Ascending aorta (tissue), 2 donors: ENCODE measurements at regions of chr4 and their contacts with region 1.

Region 1: DNA sequence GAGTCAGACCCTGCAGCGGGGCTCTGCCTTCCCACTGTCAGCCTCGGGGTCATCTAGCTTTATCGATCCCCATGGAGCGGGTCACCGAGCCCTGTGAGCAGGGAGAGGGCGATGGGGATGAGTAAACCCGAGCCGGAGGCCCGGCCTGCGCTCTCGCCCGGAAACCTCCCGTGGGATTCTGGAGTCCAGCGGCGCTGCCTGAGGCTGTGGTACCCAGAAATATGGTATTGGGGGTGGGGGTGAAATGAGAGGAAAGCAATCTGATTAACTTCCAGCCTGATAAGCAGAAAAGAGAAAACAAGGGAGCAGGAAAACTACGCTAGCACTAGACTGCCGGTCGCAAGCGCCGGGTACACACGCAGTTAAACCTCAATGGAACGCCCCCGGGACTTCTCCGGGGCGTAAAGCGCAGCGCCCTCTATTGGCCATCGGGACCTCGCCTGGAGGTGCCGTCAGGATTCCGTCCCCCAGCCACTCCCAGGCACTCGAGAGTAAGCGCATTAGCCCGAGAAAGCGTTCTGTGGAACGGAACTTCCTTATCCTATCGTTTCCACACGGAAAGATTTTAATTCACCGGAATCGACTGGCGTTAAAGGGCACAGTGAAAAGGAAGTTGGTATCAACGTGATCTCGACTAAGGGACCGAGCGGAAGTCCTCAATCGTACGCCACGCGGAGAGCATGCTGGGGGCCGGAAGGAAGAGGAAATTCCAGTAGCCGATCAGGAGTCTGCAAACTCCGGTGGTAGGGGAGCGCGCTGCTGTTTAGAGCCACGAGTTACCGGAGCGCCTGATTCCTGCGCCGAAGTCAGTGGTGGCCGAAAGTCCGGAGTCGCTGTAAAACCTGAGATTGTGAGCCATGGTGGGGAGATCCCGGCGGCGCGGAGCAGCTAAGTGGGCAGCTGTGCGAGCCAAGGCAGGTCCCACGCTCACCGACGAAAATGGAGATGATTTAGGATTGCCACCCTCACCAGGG is at the start of gene UTP3:
- DNase-seq: peak; percentile 72 to 97
- H3K4me3 ChIP-seq: peak within 1 kb of the TSS; percentile 86 to 88
- H3K27ac ChIP-seq: peak within 1 kb of the TSS; percentile 81 to 98
- H3K4me1 ChIP-seq: peaks cover 0 to 23% of the 10 kb centered on the region in 2 donors
- H3K27me3 ChIP-seq: no peaks in the 10 kb centered on the region
- CTCF ChIP-seq: peak; percentile 86 to 92 (median 90)
- total RNA-seq, gene UTP3: 3.2 TPM

Region 2: DNA sequence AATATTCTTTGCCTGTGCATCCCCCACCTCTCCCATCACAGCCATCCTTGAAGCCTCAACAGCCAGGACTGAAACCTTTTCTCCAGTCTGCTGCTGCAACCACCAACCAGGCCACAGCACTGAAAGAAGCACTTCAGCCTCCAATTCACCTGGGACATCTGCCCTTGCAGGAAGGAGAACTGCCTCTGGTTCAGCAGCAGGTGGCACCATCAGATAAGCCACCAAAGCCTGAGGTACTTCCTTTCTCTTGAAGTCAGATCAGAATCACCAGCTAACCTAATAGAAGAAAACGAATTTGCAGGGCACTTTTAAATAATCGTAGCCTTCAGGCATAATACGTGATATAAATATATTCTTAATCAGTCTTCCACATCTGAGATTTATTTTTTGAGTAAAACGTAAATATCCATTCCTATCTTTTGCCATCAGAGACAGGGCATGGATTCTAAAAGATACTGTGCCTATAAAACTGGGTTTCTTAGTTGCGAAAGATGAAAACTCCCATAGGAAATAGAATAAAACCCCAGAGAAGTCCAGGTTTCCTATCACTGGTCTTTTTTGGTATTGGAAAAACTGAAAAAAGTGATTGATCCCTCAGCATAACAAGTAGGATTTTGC is 86.6 kb before region 1 on chr4:
- intact Hi-C with region 1: loop called (anchors 2 kb)
- DNase-seq: peak in 1 of 2 donors; percentile 67
- H3K4me3 ChIP-seq: no peak overlapping the region
- H3K27ac ChIP-seq: no peak overlapping the region
- H3K4me1 ChIP-seq: no peaks in the 10 kb centered on the region
- H3K27me3 ChIP-seq: no peaks in the 10 kb centered on the region
- CTCF ChIP-seq: peak; percentile 54 to 70 (median 64)

Region 3: DNA sequence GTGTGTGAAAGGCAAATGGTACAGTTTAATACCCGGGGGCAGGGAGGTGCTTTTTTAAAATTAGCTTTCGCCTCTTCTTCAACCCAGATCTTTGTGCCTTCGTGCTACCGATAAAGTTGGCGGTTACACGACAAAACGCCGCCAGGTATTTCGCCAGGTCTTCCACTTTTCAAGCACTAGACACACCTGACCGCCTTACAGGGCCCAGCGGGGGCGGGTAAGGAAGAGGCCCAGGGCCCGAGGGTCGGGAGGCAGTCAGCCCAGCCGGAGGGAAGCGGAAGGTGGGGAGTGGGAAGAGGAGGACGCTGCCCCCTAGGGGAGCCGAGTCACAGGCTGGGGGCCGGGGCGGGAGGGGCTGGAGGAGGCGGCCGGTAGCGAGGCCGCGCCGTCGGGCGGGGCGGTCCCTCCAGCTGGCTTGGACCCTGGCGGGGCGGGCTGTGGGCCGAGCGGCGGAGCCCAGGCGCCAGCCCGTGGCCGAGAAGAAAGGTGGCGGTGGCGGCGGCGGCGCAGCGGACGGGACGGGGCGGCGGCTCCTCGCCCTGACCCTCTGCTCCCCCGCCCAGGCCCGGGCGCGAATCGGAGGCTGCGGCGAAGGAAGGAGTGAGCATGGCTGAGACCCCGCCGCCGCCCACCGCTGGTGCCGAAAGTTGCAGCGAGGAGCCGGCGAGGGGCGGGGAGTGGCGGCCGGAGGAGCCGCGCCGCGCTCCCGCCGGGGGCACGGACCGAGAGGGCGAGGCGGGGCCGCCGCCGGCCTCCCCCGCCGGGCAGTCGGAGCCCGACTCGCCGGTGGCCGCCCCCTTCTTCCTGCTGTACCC is 16.4 kb after region 1 on chr4:
- intact Hi-C with region 1: loop called (anchors 1 kb)
- DNase-seq: peak; percentile 24 to 88
- H3K4me3 ChIP-seq: peak overlapping the region; percentile 89 to 98
- H3K27ac ChIP-seq: peak overlapping the region; percentile 92 to 96
- H3K4me1 ChIP-seq: peaks cover 0 to 11% of the 10 kb centered on the region in 2 donors
- H3K27me3 ChIP-seq: no peaks in the 10 kb centered on the region
- CTCF ChIP-seq: peak; percentile 13 to 54 (median 28)

Region 4: GRCh38 chr4:70829015-70829414 is 140.9 kb after region 1 on chr4:
- intact Hi-C with region 1: no loop called
- DNase-seq: no peak
- H3K4me3 ChIP-seq: no peak overlapping the region
- H3K27ac ChIP-seq: no peak overlapping the region
- H3K4me1 ChIP-seq: no peaks in the 10 kb centered on the region
- H3K27me3 ChIP-seq: no peaks in the 10 kb centered on the region
- CTCF ChIP-seq: no peak

Region 5: GRCh38 chr4:70901984-70902576 is 214.0 kb after region 1 on chr4 and contains the start of gene MOB1B:
- intact Hi-C with region 1: loop called (anchors 10 kb)
- DNase-seq: peak; percentile 49 to 91
- H3K4me3 ChIP-seq: peak within 1 kb of the TSS; percentile 83 to 86
- H3K27ac ChIP-seq: peak within 1 kb of the TSS; percentile 77 to 85
- H3K4me1 ChIP-seq: no peaks in the 10 kb centered on the region
- H3K27me3 ChIP-seq: no peaks in the 10 kb centered on the region
- CTCF ChIP-seq: peak; percentile 24 to 57 (median 54)
- total RNA-seq, gene MOB1B: 2.6 TPM

Region 6: GRCh38 chr4:71020611-71021010 is 332.5 kb after region 1 on chr4:
- intact Hi-C with region 1: no loop called
- DNase-seq: no peak
- H3K4me3 ChIP-seq: no peak overlapping the region
- H3K27ac ChIP-seq: no peak overlapping the region
- H3K4me1 ChIP-seq: no peaks in the 10 kb centered on the region
- H3K27me3 ChIP-seq: no peaks in the 10 kb centered on the region
- CTCF ChIP-seq: no peak

Region 7: GRCh38 chr4:72451349-72451748 is 1763.2 kb after region 1 on chr4:
- intact Hi-C with region 1: loop called (anchors 5 kb)
- DNase-seq: peak in 1 of 2 donors; percentile 65
- H3K4me3 ChIP-seq: no peak overlapping the region
- H3K27ac ChIP-seq: peak overlapping the region; percentile 39 to 44
- H3K4me1 ChIP-seq: no peaks in the 10 kb centered on the region
- H3K27me3 ChIP-seq: no peaks in the 10 kb centered on the region
- CTCF ChIP-seq: no peak